CD4-positive, alpha-beta memory T cell (primary cell): ENCODE measurements at regions of chr3 and their contacts with region 1.

Region 1: DNA sequence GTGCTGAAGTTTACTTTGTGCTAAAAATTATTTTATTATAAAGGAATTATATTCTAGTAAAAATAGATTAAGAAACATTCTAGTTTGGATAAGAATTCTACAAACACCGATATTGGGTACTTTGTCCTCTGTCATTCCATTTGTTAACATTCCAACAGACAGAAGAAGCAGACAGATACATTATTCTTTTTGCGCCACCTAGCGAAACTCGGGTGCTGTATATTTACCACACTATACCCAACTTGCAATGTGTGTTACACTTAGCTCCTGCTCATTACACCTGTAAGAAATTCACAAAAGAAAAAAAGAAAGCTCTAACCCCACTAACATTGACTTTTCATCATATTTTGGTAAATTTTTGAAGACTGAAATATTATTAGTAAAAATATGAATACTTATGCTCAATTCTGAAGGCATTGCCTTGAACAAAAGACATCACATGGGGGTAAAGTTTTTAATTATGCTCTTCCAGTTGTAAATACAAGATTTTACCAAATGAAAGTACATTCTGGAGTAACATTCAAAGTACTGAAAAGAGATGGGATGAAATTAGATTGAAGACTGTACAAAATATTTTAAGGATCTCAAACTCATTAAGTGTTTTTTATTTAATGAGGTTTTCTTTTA is 136.5 kb upstream of the MLF1 start:
- DNase-seq: peak in 4 of 5 donors; percentile 13 to 28 (median 15)
- H3K4me3 ChIP-seq: no peak overlapping the region
- H3K4me3 Mint-ChIP-seq: no peak overlapping the region
- H3K27ac ChIP-seq: no peak overlapping the region
- H3K27ac Mint-ChIP-seq: no peak overlapping the region
- H3K4me1 ChIP-seq: no peaks in the 10 kb centered on the region
- H3K4me1 Mint-ChIP-seq: no peaks in the 10 kb centered on the region
- H3K27me3 ChIP-seq: no peaks in the 10 kb centered on the region
- H3K27me3 Mint-ChIP-seq: no peaks in the 10 kb centered on the region

Region 2: DNA sequence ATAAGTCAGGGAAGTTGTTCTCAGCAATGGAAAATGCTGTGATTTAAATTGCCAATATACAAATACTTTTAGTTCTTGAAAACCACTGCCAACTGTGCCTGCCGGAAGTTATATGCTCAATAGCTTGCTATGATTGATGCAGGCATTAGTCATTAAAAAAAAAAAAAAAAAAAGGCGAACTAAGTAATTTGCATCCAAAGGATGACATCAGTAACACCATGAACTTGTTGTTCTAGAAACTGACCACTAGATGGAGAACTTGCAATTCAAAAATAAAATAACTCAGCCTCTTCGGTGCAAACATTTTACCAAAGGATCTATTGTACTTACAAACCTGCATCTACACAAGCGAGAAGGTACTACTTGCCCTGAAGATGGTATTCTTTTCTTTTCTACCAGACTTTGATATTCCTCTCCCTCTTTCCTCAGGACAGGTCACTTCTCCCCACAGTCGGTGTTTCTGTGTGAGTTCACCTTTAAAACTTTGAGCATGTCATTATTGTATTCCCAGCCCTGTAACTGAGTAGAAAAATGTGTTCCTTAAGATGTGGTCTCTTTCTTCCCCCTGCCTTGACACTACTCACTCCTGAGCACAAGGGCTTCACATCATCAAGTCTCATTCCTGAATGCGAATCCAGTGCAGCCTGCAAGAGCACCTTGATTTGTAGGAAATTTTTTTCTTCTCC is 816.3 kb before region 1 on chr3:
- CTCF ChIA-PET with region 1: interaction called, 11 read pairs
- POLR2A ChIA-PET with region 1: no interaction called
- intact Hi-C with region 1: no loop called
- DNase-seq: peak in 4 of 5 donors; percentile 28 to 47 (median 44)
- H3K4me3 ChIP-seq: no peak overlapping the region
- H3K4me3 Mint-ChIP-seq: peak overlapping the region in 1 of 8 donors; percentile 24
- H3K27ac ChIP-seq: no peak overlapping the region
- H3K27ac Mint-ChIP-seq: peak overlapping the region in 1 of 7 donors; percentile 33
- H3K4me1 ChIP-seq: peaks cover 7% of the 10 kb centered on the region
- H3K4me1 Mint-ChIP-seq: peaks cover 3 to 6% (median 4%) of the 10 kb centered on the region in 4 donors
- H3K27me3 ChIP-seq: no peaks in the 10 kb centered on the region
- H3K27me3 Mint-ChIP-seq: peaks cover 9 to 11% of the 10 kb centered on the region in 2 donors

Region 3: GRCh38 chr3:157865352-157866000 is 569.0 kb before region 1 on chr3:
- CTCF ChIA-PET with region 1: no interaction called
- POLR2A ChIA-PET with region 1: no interaction called
- intact Hi-C with region 1: loop called (anchors 10 kb)
- DNase-seq: peak in 2 of 5 donors; percentile 1 to 6
- H3K4me3 ChIP-seq: no peak overlapping the region
- H3K4me3 Mint-ChIP-seq: no peak overlapping the region
- H3K27ac ChIP-seq: no peak overlapping the region
- H3K27ac Mint-ChIP-seq: no peak overlapping the region
- H3K4me1 ChIP-seq: no peaks in the 10 kb centered on the region
- H3K4me1 Mint-ChIP-seq: no peaks in the 10 kb centered on the region
- H3K27me3 ChIP-seq: no peaks in the 10 kb centered on the region
- H3K27me3 Mint-ChIP-seq: no peaks in the 10 kb centered on the region

Region 4: GRCh38 chr3:158617982-158618875 is 183.7 kb after region 1 on chr3:
- CTCF ChIA-PET with region 1: no interaction called
- POLR2A ChIA-PET with region 1: no interaction called
- intact Hi-C with region 1: no loop called
- DNase-seq: no peak
- H3K4me3 ChIP-seq: no peak overlapping the region
- H3K4me3 Mint-ChIP-seq: no peak overlapping the region
- H3K27ac ChIP-seq: no peak overlapping the region
- H3K27ac Mint-ChIP-seq: no peak overlapping the region
- H3K4me1 ChIP-seq: no peaks in the 10 kb centered on the region
- H3K4me1 Mint-ChIP-seq: peaks cover 0 to 5% (median 0%) of the 10 kb centered on the region in 4 donors
- H3K27me3 ChIP-seq: no peaks in the 10 kb centered on the region
- H3K27me3 Mint-ChIP-seq: peaks cover 0 to 12% of the 10 kb centered on the region in 2 donors